ENCODE measurements at regions of chr7 and their contacts with region 1.

Region 1: GRCh38 chr7:116083796-116084195 is 53.2 kb upstream of the TFEC start:
- DNase-seq: no peak
- H3K4me3 Mint-ChIP-seq: no peak overlapping the region
- H3K27ac Mint-ChIP-seq: no peak overlapping the region
- H3K4me1 Mint-ChIP-seq: no peaks in the 10 kb centered on the region
- H3K27me3 Mint-ChIP-seq: no peaks in the 10 kb centered on the region

Region 2: DNA sequence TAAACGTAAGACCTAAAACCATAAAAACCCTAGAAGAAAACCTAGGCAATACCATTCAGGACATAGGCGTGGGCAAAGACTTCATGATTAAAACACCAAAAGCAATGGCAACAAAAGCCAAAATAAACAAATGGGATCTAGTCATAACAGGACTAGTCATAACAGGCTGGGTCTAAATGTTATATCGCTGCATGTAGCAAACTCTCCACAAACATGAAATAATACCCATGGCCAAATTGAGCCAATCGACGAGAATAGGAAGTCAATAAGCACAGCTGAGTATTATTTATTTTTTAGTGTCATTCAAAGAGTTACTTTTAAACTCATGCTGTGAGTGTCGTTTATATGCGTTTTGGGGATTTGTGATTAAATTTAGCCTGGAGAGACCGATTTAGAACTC is 278.3 kb before region 1 on chr7:
- intact Hi-C with region 1: loop called (anchors 5 kb)
- DNase-seq: no peak
- H3K4me3 Mint-ChIP-seq: no peak overlapping the region
- H3K27ac Mint-ChIP-seq: no peak overlapping the region
- H3K4me1 Mint-ChIP-seq: no peaks in the 10 kb centered on the region
- H3K27me3 Mint-ChIP-seq: no peaks in the 10 kb centered on the region

Region 3: DNA sequence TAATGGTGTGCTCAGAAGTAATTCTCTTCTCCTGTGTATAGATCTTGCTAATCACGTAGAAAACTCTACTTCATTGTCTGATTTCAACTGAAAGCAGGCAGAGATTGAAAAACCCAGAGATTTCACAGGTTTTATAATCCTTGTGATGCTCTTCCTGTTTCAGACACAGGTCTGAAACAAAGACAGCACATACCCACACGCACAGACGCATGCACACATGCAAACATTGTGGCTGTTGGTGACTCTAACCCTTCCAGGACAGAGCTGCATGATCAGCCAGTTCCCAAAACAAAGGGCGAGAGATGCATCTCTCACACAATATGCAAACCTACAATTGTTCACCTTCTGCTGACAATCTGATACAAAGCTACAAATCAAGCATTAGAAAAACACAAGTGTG is 42.2 kb before region 1 on chr7:
- intact Hi-C with region 1: no loop called
- DNase-seq: no peak
- H3K4me3 Mint-ChIP-seq: no peak overlapping the region
- H3K27ac Mint-ChIP-seq: no peak overlapping the region
- H3K4me1 Mint-ChIP-seq: no peaks in the 10 kb centered on the region
- H3K27me3 Mint-ChIP-seq: no peaks in the 10 kb centered on the region